Ovary (tissue), 10 donors: ENCODE measurements at regions of chr1 and their contacts with region 1.

Region 1: GRCh38 chr1:112715264-112716053 is at the start of gene PPM1J:
- DNase-seq: peak; percentile 96 to 99 (median 98)
- H3K4me3 ChIP-seq: peak within 1 kb of the TSS; percentile 72
- H3K27ac ChIP-seq: peak within 1 kb of the TSS; percentile 51 to 55
- H3K4me1 ChIP-seq: peaks cover 4% of the 10 kb centered on the region
- H3K27me3 ChIP-seq: no peaks in the 10 kb centered on the region
- CTCF ChIP-seq: peak in 1 of 3 donors; percentile 9
- EP300 ChIP-seq: no peak
- POLR2A ChIP-seq: no peak
- total RNA-seq, gene PPM1J: 1.4 to 6.3 (median 2.9) TPM

Region 2: DNA sequence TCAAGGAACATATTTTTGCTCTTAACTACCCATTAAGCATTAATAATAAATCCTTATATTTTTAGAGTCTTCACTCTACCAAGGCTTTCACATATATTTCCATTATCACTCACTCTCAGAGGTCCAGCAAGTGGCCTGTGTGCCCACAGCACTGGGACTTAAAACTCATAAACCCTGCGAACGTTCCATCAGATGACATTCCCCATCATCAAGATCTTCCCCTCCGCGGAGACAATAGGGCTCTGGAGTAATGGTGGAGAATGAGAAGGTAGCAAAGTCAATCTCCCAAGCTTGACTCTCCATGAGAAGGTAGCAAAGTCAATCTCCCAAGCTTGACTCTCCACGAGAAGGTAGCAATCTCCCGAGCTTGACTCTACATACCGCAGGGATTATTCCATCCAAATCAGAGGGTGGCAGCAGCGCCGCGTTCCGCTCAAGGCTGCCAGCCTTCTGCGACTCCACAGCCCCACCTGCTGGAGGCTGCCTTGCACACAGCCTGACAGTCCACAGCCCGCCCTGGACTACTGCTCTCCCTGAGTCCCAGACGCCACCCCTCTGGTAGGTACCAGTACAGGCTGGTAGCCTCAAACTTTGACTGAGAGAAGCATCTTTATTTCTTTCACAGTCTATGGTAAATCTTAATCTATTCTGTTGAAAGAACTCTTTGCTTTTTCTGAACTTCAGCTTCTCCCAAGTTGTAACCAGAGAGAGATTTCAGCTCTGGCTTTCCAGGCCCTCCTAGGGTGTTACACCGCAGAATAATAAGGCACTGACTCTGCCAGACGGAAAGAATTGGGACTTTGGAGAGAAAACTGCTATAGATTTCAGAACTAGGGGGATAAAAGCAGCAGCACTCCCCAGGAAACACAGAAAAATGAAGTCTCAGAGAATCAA is 345.8 kb before region 1 on chr1:
- intact Hi-C with region 1: loop called in 1 of 4 experiments (anchors 10 kb)
- DNase-seq: peak; percentile 80 to 93 (median 85)
- H3K4me3 ChIP-seq: no peak overlapping the region
- H3K27ac ChIP-seq: no peak overlapping the region
- H3K4me1 ChIP-seq: no peaks in the 10 kb centered on the region
- H3K27me3 ChIP-seq: no peaks in the 10 kb centered on the region
- CTCF ChIP-seq: peak; percentile 78 to 88 (median 84)
- EP300 ChIP-seq: no peak
- POLR2A ChIP-seq: no peak

Region 3: GRCh38 chr1:112882271-112882744 is 166.8 kb after region 1 on chr1:
- intact Hi-C with region 1: loop called in 2 of 4 experiments (anchors 5 kb)
- DNase-seq: peak in 1 of 5 donors; percentile 36
- H3K4me3 ChIP-seq: no peak overlapping the region
- H3K27ac ChIP-seq: no peak overlapping the region
- H3K4me1 ChIP-seq: no peaks in the 10 kb centered on the region
- H3K27me3 ChIP-seq: no peaks in the 10 kb centered on the region
- CTCF ChIP-seq: no peak
- EP300 ChIP-seq: no peak
- POLR2A ChIP-seq: no peak

Region 4: DNA sequence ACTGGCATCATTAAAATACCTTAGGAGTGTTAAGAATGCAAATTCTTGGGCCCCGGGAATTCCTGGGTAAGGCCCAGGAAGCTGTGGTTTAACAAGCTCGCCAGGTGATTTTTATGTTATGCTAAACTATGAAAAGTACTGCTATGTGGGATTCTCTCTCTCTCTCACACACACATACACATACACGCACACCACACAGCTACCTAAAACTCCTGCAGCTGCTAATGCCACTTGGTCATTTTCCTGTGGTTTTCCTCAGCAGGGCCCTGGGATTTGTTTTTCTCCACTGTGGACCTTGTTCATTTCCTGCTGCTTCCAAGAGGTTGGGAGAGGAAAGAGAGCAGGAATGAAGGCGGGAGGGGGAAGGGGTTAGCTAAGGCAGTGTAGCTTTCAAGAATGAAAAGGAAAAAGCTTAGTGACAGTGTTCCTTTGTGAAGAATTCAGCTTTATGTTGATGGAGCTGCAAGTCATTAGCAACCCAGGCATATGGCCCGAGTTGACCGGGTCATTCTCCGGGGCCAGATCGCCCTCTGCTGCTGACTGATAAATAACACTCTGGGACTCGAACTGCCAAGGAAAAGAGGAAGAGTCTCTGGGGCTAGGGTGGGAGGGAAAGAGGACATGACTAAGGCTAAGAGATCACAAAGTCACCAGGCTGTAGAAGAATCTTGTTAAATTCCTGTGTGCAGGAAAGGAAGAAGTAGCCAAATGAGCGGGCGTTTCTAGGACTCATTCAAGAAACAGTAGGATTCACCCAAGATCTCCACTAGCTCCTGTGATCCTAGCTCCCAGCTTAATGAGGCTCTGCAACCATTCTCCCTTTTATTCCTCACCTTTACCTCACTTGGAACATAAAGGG is 327.1 kb after region 1 on chr1:
- intact Hi-C with region 1: loop called in 3 of 4 experiments (anchors 5 to 10 kb)
- DNase-seq: peak; percentile 40 to 69 (median 55)
- H3K4me3 ChIP-seq: no peak overlapping the region
- H3K27ac ChIP-seq: no peak overlapping the region
- H3K4me1 ChIP-seq: no peaks in the 10 kb centered on the region
- H3K27me3 ChIP-seq: no peaks in the 10 kb centered on the region
- CTCF ChIP-seq: peak in 2 of 3 donors; percentile 24 to 37
- EP300 ChIP-seq: no peak
- POLR2A ChIP-seq: no peak

Region 5: DNA sequence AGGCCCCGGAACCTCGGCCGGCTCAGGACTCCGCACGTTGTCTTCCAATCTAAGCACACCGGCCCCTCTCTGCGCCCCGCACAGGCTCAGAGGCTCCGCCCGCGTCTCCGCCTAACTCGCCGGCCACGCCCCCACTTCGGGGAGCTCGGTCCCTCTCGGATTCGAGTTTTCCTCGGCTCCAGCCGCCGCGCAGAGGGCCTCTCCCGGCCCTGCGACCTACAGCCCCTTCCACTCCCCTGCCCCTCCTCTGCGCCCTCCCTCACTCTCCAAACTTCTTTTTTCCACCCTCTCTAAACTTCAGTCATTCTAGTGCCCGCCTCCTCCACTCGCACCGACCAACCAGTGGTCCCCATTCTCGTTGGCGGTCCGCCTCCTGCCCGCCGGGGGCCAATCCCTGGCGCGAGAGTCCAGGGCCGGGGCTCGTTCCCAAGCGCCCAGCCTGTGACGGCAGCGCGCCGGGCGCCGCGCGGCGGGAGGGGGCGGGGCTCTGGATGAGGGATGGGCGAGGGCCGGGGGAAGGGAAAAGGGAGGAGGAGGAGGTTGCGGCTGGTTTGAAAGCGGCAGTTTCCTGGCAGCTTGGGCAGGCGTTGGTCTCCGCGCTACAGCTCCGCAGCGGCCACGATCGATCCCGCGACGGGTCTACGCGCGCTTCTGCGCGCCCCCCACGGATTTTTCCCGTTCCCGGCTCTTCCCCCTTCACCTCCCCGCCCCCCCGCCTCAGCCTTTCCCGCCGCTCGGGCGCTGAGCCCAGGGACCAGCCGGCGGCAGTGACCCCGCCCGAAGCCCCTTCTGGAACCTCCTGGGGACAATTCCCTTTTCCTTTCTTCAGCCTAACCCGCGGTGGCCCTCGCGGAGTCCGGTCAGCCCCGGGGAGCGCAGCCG is 674.7 kb after region 1 on chr1 and contains the start of gene MAGI3:
- intact Hi-C with region 1: loop called in 1 of 4 experiments (anchors 10 kb)
- DNase-seq: peak; percentile 98 to 99 (median 99)
- H3K4me3 ChIP-seq: peak within 1 kb of the TSS; percentile 97
- H3K27ac ChIP-seq: peak within 1 kb of the TSS; percentile 83 to 89
- H3K4me1 ChIP-seq: peaks cover 1% of the 10 kb centered on the region
- H3K27me3 ChIP-seq: no peaks in the 10 kb centered on the region
- CTCF ChIP-seq: no peak
- EP300 ChIP-seq: no peak
- POLR2A ChIP-seq: peak; percentile 68
- total RNA-seq, gene MAGI3: 13.4 to 20.8 (median 15.8) TPM